Prostate gland (tissue), 2 donors: ENCODE measurements at regions of chr19 and their contacts with region 1.

Region 1: GRCh38 chr19:2475702-2476450 is at the start of gene GADD45B:
- DNase-seq: peak; percentile 98
- H3K4me3 ChIP-seq: peak within 1 kb of the TSS; percentile 89
- H3K27ac ChIP-seq: peak within 1 kb of the TSS; percentile 96 to 99
- H3K4me1 ChIP-seq: no peaks in the 10 kb centered on the region
- H3K27me3 ChIP-seq: no peaks in the 10 kb centered on the region
- CTCF ChIP-seq: peak in 1 of 4 experiments; percentile 42
- POLR2A ChIP-seq: peak; percentile 100
- total RNA-seq, gene GADD45B: 90.7 to 94.6 TPM

Region 2: DNA sequence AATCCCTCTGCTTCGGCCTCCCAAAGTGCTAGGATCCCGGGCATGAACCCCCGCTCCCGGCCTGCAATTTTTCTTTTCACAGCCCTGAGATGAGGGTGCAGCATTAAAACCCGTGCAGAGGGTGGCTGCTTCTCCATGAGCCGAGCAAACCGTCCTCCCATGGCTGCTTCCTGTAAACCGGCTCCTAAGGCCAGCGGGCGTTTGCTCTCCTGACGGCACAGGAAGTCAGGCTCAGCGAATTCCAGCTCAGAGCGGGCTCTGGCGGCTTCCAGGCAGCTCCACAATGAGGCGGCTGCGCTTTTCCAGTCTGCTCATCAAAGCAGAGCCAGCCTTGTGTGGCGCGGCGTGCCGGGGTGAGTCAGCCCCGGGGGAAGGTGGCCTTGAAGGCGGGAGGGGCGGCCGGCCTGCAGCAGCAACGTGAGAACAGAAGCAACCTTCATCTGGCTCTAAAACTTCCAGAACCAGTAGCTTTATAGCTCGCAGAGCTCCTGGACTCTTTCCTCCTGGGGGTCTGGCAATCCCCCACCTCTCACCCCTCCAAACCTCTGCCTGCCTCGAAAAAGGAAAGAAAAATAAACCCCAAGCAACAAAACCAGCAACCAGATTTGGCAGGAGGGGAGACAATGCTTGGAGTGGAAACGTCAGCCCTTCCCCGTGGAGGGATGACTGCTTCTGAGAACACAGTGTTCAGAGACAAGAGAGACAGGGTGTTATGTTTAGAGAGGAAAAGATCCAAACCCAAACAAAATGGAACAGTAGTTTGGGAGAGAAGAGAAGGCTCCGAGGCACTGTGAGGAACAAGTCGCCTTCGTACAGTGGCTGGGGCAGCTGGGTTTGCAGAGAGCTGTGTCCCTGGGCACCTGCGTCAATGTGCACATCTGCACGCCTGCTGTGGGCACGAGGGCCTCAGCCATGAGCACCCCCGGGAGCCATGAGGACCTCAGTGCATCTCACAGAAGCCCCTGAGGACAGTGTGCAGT is 67.9 kb after region 1 on chr19:
- intact Hi-C with region 1: loop called (anchors 2 kb)
- DNase-seq: peak; percentile 91
- H3K4me3 ChIP-seq: peak overlapping the region in 1 of 2 donors; percentile 10
- H3K27ac ChIP-seq: peak overlapping the region; percentile 88 to 92
- H3K4me1 ChIP-seq: peaks cover 44% of the 10 kb centered on the region
- H3K27me3 ChIP-seq: no peaks in the 10 kb centered on the region
- CTCF ChIP-seq: peak in 2 of 4 experiments; percentile 30 to 48
- POLR2A ChIP-seq: peak; percentile 38

Region 3: DNA sequence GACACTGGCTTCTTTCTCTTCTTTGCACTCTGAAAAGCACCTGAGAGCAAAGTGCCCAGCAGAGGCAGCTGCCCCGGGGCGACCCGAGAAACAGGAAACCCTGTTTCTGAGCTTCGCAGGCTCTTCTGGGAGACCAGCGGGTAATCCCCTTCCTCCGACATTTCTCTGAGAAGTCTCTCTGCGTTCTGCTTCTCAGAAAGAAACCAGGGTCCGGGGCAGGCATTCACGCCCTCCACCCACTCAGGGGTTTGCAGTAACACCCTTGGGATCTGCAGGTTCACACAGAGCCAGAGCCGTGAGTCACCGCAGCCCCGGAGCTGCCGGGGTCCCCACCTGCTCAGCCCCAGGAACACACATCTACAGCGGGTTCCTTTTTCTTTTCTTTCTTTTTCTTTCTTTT is 86.0 kb after region 1 on chr19:
- intact Hi-C with region 1: no loop called
- DNase-seq: no peak
- H3K4me3 ChIP-seq: no peak overlapping the region
- H3K27ac ChIP-seq: no peak overlapping the region
- H3K4me1 ChIP-seq: no peaks in the 10 kb centered on the region
- H3K27me3 ChIP-seq: no peaks in the 10 kb centered on the region
- CTCF ChIP-seq: no peak
- POLR2A ChIP-seq: no peak

Region 4: DNA sequence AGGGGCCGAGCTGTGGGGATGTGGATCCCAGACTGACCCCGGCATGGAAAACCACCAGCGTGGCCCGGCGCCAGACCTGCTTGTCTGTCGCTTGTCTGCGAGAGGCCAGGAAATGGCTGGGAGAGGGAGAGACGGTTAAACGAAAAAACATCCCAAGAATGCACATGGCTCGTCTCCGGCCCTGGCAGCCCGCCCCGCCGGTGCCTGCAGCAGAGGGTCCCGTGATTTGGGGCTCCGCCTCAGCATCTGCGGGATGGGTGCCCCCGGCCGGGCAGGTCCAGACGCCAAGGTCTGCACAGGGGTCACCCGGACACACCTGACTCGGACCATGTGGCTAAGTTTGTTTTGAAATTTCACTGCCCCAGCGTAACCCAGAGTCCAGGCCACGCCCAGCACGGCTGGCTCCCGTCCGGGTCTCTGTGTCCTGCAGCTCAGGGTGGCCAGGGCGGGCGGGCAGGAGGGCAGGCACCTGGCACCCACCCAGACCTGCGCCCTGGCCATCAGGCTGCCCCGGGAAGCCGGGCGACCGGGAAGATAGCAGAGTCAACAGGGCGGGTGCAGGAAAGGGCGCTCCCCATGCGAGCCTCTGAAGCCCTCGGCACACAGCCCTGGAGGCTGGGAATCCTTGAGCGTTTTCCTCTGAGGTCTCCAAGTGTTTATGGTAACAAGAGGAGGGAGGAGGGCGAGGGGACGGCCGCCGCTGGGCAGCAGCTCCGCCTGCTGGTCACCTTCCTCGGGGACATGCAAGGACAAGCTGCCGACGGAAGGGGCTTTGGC is 103.2 kb after region 1 on chr19:
- intact Hi-C with region 1: loop called (anchors 1 kb)
- DNase-seq: peak; percentile 91
- H3K4me3 ChIP-seq: peak overlapping the region; percentile 31 to 37
- H3K27ac ChIP-seq: peak overlapping the region; percentile 78 to 83
- H3K4me1 ChIP-seq: peaks cover 15% of the 10 kb centered on the region
- H3K27me3 ChIP-seq: no peaks in the 10 kb centered on the region
- CTCF ChIP-seq: peak; percentile 86 to 99 (median 97)
- POLR2A ChIP-seq: no peak

Region 5: GRCh38 chr19:2610637-2611482 is 135.0 kb after region 1 on chr19:
- intact Hi-C with region 1: loop called (anchors 1 kb)
- DNase-seq: peak; percentile 91
- H3K4me3 ChIP-seq: peak overlapping the region; percentile 28 to 41
- H3K27ac ChIP-seq: peak overlapping the region; percentile 77 to 83
- H3K4me1 ChIP-seq: no peaks in the 10 kb centered on the region
- H3K27me3 ChIP-seq: no peaks in the 10 kb centered on the region
- CTCF ChIP-seq: peak; percentile 92 to 99 (median 98)
- POLR2A ChIP-seq: peak; percentile 16

Region 6: GRCh38 chr19:2739602-2740313 is 263.9 kb after region 1 on chr19 and contains the start of gene SLC39A3:
- intact Hi-C with region 1: loop called (anchors 10 kb)
- DNase-seq: peak; percentile 98
- H3K4me3 ChIP-seq: peak within 1 kb of the TSS; percentile 74 to 95
- H3K27ac ChIP-seq: peak within 1 kb of the TSS in 1 of 2 donors; percentile 45
- H3K4me1 ChIP-seq: peaks cover 3% of the 10 kb centered on the region
- H3K27me3 ChIP-seq: no peaks in the 10 kb centered on the region
- CTCF ChIP-seq: peak in 3 of 4 experiments; percentile 11 to 60 (median 47)
- POLR2A ChIP-seq: peak; percentile 18
- total RNA-seq, gene SLC39A3: 46.6 to 67.9 TPM